Sigmoid colon (tissue), 7 donors: ENCODE measurements at regions of chr17 and their contacts with region 1.

Region 1: GRCh38 chr17:48131216-48131824 is 23.8 kb downstream of the SNX11 start:
- DNase-seq: peak; percentile 70
- H3K4me3 ChIP-seq: no peak overlapping the region
- H3K27ac ChIP-seq: no peak overlapping the region
- H3K4me1 ChIP-seq: no peaks in the 10 kb centered on the region
- H3K27me3 ChIP-seq: no peaks in the 10 kb centered on the region
- CTCF ChIP-seq: peak; percentile 69 to 79 (median 78)
- EP300 ChIP-seq: no peak
- POLR2A ChIP-seq: no peak

Region 2: DNA sequence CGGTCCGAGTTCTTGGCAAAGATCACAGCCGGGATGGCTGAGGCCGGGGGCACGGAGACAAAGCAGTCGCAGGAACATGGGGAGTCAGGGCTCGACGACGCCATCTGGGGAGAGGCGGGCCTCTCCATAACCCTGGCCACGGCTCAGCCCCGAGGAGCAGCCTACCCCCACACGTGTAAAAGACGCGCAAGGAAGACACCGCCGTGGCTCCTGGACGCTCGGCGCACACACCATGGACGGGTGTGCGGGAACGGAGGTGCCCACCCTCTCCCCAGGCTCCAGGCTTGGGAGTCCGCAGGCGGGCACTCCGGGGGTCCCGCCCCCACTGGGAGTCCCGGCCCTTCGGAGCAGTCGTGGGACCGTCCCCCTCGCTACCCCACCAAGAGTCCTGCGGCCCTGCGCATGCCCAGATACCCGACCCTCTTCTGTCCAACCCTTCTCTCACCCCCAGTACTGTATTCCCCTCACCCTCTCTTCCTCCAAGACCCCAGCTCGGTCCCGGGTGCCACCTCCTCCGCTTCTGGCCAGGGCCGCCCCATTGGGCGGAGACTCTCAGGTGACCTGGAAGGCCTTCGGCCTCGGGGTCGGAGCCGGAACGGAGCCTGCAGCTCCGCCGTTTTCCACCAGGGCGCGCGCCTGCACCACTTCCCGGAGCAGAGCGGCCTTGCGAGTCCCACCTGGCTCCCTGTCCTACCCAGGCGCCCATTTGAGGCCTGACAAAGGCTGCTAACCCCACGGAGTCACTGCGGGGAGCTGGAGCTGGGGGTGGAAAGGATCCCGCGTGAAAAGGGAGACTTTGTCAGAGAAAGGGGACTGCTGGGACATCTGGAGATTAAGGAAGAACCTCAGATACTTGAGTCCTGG is 290.3 kb before region 1 on chr17 and contains the start of gene SCRN2:
- intact Hi-C with region 1: loop called (anchors 10 kb)
- DNase-seq: peak; percentile 94
- H3K4me3 ChIP-seq: peak within 1 kb of the TSS; percentile 71 to 91 (median 80)
- H3K27ac ChIP-seq: peak within 1 kb of the TSS; percentile 63 to 80 (median 76)
- H3K4me1 ChIP-seq: peaks cover 0 to 22% (median 18%) of the 10 kb centered on the region in 4 donors
- H3K27me3 ChIP-seq: peaks cover 5 to 11% (median 9%) of the 10 kb centered on the region in 3 donors
- CTCF ChIP-seq: peak; percentile 96 to 99 (median 98)
- EP300 ChIP-seq: no peak
- POLR2A ChIP-seq: no peak
- total RNA-seq, gene SCRN2: 22.5 to 28.8 (median 23.4) TPM

Region 3: DNA sequence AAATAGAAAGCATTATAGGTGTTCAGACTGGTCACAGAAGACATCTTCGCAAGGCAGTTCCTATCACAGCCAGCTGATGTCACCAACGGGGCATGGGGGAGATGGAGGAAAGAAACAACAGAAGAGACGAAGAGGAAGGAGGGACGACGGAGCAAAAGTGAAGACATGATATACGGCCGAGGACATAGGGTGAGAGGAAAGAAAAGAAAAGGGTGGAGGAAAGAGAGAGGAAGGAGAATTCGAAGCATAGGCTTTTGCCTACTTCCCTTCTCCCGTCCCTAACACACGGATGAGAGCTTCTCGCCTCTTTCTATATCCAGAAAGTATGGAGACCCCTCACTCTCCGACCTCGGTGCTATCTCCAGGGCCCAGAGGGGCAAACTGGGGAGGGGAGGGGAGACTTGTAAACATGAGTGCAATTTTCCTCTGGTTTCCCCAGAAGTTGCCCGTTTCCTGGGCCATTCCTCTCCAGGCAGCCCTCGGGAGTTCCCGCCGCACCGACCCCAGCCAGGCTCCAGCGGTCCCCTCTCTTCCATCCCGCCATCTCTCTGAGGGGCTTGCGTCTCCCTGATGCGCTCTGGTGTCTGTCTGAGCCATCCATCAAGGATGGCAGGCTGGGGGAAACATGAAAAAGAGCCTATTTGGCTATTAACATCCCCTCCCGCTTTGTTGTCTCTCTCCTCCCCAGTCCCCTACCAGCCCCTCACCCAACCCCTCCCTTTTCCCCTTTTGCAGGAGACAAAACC is 119.7 kb before region 1 on chr17:
- intact Hi-C with region 1: no loop called
- DNase-seq: no peak
- H3K4me3 ChIP-seq: peak overlapping the region in 3 of 4 donors; percentile 10 to 39 (median 38)
- H3K27ac ChIP-seq: no peak overlapping the region
- H3K4me1 ChIP-seq: peaks cover 0 to 12% (median 11%) of the 10 kb centered on the region in 4 donors
- H3K27me3 ChIP-seq: peaks cover 4 to 77% (median 22%) of the 10 kb centered on the region in 3 donors
- CTCF ChIP-seq: peak in 1 of 4 experiments; percentile 16
- EP300 ChIP-seq: no peak
- POLR2A ChIP-seq: no peak

Region 4: GRCh38 chr17:48074315-48075081 is 56.8 kb before region 1 on chr17:
- intact Hi-C with region 1: loop called (anchors 2 kb)
- DNase-seq: peak; percentile 86
- H3K4me3 ChIP-seq: no peak overlapping the region
- H3K27ac ChIP-seq: peak overlapping the region in 3 of 4 donors; percentile 19 to 45 (median 39)
- H3K4me1 ChIP-seq: peaks cover 0 to 9% (median 3%) of the 10 kb centered on the region in 4 donors
- H3K27me3 ChIP-seq: no peaks in the 10 kb centered on the region
- CTCF ChIP-seq: peak; percentile 52 to 84 (median 74)
- EP300 ChIP-seq: no peak
- POLR2A ChIP-seq: no peak

Region 5: GRCh38 chr17:48307814-48308411 is 176.6 kb after region 1 on chr17:
- intact Hi-C with region 1: no loop called
- DNase-seq: peak; percentile 69
- H3K4me3 ChIP-seq: no peak overlapping the region
- H3K27ac ChIP-seq: no peak overlapping the region
- H3K4me1 ChIP-seq: no peaks in the 10 kb centered on the region
- H3K27me3 ChIP-seq: peaks cover 16 to 99% (median 41%) of the 10 kb centered on the region in 3 donors
- CTCF ChIP-seq: peak; percentile 37 to 79 (median 58)
- EP300 ChIP-seq: no peak
- POLR2A ChIP-seq: no peak

Region 6: DNA sequence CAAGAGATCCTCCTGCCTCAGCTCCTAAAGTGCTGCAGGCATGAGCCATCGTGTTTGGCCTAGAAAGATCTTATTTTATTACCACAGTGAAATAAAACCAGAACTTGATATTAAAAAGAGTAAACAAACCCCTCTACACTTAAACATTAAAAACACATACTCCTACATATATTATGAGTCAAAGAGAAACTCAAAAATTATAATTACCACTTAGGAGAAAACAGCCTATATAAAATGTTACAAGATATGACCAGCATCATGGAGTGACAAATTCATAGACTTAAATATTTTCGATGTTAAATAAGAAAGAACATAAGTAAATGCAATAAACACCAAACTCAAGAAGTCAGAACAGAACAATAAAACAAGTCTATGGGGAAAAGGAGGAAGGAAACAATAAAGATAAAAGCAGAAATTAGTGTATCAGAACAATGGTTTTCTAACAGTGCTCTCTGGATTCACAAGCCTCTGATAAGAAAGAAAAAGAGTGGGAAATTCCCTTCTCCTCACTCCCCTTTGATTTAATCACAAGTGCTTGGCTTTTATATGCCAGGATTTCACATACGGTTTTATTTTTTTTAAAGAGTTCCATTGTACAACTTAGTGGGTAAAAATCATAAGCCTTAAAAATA is 275.7 kb after region 1 on chr17:
- intact Hi-C with region 1: no loop called
- DNase-seq: no peak
- H3K4me3 ChIP-seq: no peak overlapping the region
- H3K27ac ChIP-seq: no peak overlapping the region
- H3K4me1 ChIP-seq: no peaks in the 10 kb centered on the region
- H3K27me3 ChIP-seq: peaks cover 0 to 20% (median 0%) of the 10 kb centered on the region in 3 donors
- CTCF ChIP-seq: no peak
- EP300 ChIP-seq: no peak
- POLR2A ChIP-seq: no peak